Naive thymus-derived CD4-positive, alpha-beta T cell (primary cell): ENCODE measurements at regions of chr17 and their contacts with region 1.

Region 1: GRCh38 chr17:1716076-1716995 is 6.2 kb upstream of the TLCD2 start:
- DNase-seq: peak; percentile 99 to 100 (median 100)
- ATAC-seq: peak; percentile 92
- H3K4me3 ChIP-seq: peak overlapping the region; percentile 92
- H3K4me3 Mint-ChIP-seq: peak overlapping the region; percentile 87 to 98 (median 94)
- H3K27ac ChIP-seq: peak overlapping the region; percentile 73
- H3K27ac Mint-ChIP-seq: peak overlapping the region; percentile 70 to 99 (median 93)
- H3K4me1 ChIP-seq: peaks cover 17 to 26% of the 10 kb centered on the region in 2 donors
- H3K4me1 Mint-ChIP-seq: peaks cover 19 to 45% (median 24%) of the 10 kb centered on the region in 7 donors
- H3K27me3 ChIP-seq: peaks cover 0 to 7% of the 10 kb centered on the region in 2 donors
- H3K27me3 Mint-ChIP-seq: peaks cover 0 to 9% (median 6%) of the 10 kb centered on the region in 5 donors

Region 2: DNA sequence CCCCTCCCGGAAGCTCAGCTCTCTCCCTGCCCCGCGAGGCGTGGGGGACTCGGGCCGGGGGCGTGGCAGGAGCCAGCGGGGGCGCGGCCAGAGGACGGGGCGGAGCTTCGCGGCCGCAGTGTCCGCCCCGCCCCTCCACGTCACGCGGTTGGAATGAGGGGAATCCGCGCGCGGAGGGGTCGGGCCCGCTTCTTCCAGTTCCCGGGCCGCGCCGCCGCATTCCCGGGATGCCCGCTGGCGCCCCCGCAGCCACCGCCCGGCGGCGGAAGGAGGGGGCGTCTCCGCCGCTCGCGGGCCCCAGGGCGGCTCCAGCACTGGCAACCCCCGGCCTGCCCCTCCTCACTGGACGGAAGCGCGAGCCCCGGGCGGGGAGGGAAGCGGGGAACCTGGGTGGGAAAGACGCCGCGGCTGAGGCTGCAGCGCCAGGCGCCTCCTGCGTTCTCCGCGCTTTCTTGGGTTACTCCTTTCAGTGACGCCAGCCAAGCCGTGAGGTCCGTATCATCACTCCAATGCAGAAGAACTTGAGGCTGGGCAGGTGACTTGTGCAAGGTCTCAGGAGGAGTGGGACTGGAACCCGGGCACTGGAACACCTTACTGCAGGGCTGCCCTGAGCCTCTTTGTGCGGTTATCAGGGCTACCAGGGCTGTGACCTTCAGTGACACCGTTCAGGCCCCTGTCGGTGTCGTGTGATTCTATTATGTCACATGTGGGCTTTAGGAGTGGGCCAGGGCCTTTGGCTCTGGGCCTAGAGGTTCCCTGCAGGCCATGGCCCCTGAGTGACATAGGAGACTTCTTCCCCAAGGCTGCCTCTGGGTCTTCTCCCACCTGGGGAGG is 228.1 kb before region 1 on chr17:
- CTCF ChIA-PET with region 1: no interaction called
- POLR2A ChIA-PET with region 1: no interaction called
- intact Hi-C with region 1: no loop called
- DNase-seq: peak; percentile 40 to 83 (median 61)
- ATAC-seq: peak; percentile 61
- H3K4me3 ChIP-seq: peak overlapping the region; percentile 65
- H3K4me3 Mint-ChIP-seq: peak overlapping the region; percentile 82 to 95 (median 88)
- H3K27ac ChIP-seq: peak overlapping the region; percentile 78
- H3K27ac Mint-ChIP-seq: peak overlapping the region; percentile 49 to 92 (median 71)
- H3K4me1 ChIP-seq: peaks cover 21 to 47% of the 10 kb centered on the region in 2 donors
- H3K4me1 Mint-ChIP-seq: peaks cover 0 to 58% (median 44%) of the 10 kb centered on the region in 7 donors
- H3K27me3 ChIP-seq: no peaks in the 10 kb centered on the region
- H3K27me3 Mint-ChIP-seq: peaks cover 0 to 4% (median 0%) of the 10 kb centered on the region in 5 donors

Region 3: GRCh38 chr17:1516388-1517161 is 199.8 kb before region 1 on chr17 and contains the start of gene INPP5K:
- CTCF ChIA-PET with region 1: no interaction called
- POLR2A ChIA-PET with region 1: interaction called, 3 read pairs
- intact Hi-C with region 1: loop called (anchors 1 kb)
- DNase-seq: peak; percentile 92 to 99 (median 97)
- ATAC-seq: peak; percentile 98
- H3K4me3 ChIP-seq: peak within 1 kb of the TSS; percentile 84
- H3K4me3 Mint-ChIP-seq: peak within 1 kb of the TSS; percentile 78 to 93 (median 91)
- H3K27ac ChIP-seq: peak within 1 kb of the TSS; percentile 97
- H3K27ac Mint-ChIP-seq: peak within 1 kb of the TSS; percentile 68 to 97 (median 92)
- H3K4me1 ChIP-seq: peaks cover 9 to 14% of the 10 kb centered on the region in 2 donors
- H3K4me1 Mint-ChIP-seq: peaks cover 18 to 47% (median 29%) of the 10 kb centered on the region in 7 donors
- H3K27me3 ChIP-seq: no peaks in the 10 kb centered on the region
- H3K27me3 Mint-ChIP-seq: no peaks in the 10 kb centered on the region
- total RNA-seq, gene INPP5K: 50.5 to 184 (median 84.2) TPM

Region 4: DNA sequence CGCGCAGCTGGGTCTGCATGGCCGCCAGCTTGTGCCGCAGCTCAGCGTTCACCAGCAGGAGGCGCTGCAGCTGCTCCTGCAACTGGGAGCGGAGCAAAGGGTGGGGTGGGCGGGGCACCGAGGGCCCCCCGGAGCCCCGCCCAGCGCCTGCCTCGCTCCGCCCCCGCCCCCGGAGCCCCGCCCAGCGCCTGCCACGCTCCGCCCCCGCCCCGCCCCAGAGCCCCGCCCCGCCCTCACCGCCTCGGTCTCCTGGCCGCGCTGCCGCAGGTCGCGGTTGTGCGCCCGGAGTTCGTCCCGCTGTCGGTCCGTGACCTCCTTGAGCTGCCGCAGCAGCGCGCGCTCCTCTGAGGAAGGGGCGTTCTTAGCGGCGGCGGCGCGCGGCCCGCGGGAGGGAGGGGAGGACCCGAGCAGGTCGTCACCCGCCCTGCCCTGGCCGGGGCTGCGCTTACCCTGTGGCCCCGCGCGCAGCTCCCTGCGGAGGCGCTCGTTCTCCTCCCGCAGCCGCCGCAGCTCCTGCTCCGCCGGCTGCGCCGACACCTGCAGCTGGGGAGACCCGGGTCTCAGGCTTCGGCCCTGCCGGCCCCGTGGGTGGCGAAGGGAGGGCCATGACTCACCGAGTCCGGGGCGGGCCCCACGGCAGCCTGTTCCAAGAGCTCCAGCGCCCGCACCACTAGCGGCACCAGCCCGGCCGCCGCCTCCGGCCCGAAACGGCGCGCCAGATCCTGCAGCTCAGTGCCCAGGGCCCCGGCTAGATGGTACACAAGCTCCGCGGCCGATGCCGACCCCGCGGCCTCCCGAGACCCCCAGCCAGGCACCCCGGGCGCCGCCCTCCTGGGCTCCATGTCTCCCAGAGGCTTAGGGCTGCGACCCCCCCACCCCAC is 67.1 kb before region 1 on chr17:
- CTCF ChIA-PET with region 1: interaction called, 8 read pairs
- POLR2A ChIA-PET with region 1: interaction called, 5 read pairs
- intact Hi-C with region 1: loop called (anchors 1 kb)
- DNase-seq: peak; percentile 88 to 97 (median 93)
- ATAC-seq: peak; percentile 90
- H3K4me3 ChIP-seq: peak overlapping the region; percentile 64
- H3K4me3 Mint-ChIP-seq: peak overlapping the region; percentile 65 to 81 (median 74)
- H3K27ac ChIP-seq: peak overlapping the region; percentile 69
- H3K27ac Mint-ChIP-seq: peak overlapping the region in 5 of 9 donors; percentile 38 to 58 (median 55)
- H3K4me1 ChIP-seq: peaks cover 15 to 21% of the 10 kb centered on the region in 2 donors
- H3K4me1 Mint-ChIP-seq: peaks cover 0 to 38% (median 10%) of the 10 kb centered on the region in 7 donors
- H3K27me3 ChIP-seq: no peaks in the 10 kb centered on the region
- H3K27me3 Mint-ChIP-seq: no peaks in the 10 kb centered on the region

Region 5: DNA sequence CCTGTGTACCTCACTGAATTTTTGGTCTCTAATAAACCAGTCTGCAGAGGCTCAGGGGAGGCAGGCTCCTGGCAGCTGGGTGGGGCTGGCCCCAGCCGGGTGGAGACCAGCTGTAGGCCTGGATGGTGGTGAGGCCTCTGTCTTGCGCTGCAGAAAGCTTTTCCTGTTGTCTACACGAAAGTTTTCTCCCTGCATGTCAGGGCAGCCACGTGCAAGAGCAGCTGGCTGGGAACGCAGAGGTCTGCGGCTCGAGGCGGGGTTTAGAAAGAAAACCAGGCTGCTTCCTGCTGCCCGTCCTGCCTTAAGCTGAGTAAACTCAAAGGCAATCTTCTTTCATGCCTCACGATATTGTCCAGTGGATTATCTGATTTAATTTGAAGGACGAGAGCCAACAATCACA is 47.9 kb after region 1 on chr17:
- CTCF ChIA-PET with region 1: interaction called, 9 read pairs
- POLR2A ChIA-PET with region 1: interaction called, 4 read pairs
- intact Hi-C with region 1: loop called (anchors 1 to 5 kb)
- DNase-seq: peak in 7 of 9 donors; percentile 60 to 84 (median 71)
- ATAC-seq: peak; percentile 88
- H3K4me3 ChIP-seq: no peak overlapping the region
- H3K4me3 Mint-ChIP-seq: peak overlapping the region; percentile 50 to 85 (median 70)
- H3K27ac ChIP-seq: peak overlapping the region; percentile 33
- H3K27ac Mint-ChIP-seq: peak overlapping the region; percentile 64 to 92 (median 84)
- H3K4me1 ChIP-seq: peaks cover 19 to 33% of the 10 kb centered on the region in 2 donors
- H3K4me1 Mint-ChIP-seq: peaks cover 22 to 60% (median 35%) of the 10 kb centered on the region in 7 donors
- H3K27me3 ChIP-seq: no peaks in the 10 kb centered on the region
- H3K27me3 Mint-ChIP-seq: peaks cover 0 to under 1% (median 0%) of the 10 kb centered on the region in 5 donors

Region 6: GRCh38 chr17:1829592-1830257 is 113.4 kb after region 1 on chr17 and contains the starts of genes RPA1 and SMYD4:
- CTCF ChIA-PET with region 1: interaction called, 7 read pairs
- POLR2A ChIA-PET with region 1: interaction called, 8 read pairs
- intact Hi-C with region 1: loop called (anchors 1 to 2 kb)
- DNase-seq: peak; percentile 84 to 94 (median 89)
- ATAC-seq: peak; percentile 100
- H3K4me3 ChIP-seq: peak within 1 kb of the TSS; percentile 82
- H3K4me3 Mint-ChIP-seq: peak within 1 kb of the TSS; percentile 89 to 100 (median 98)
- H3K27ac ChIP-seq: peak within 1 kb of the TSS; percentile 86
- H3K27ac Mint-ChIP-seq: peak within 1 kb of the TSS; percentile 89 to 99 (median 95)
- H3K4me1 ChIP-seq: peaks cover 17 to 26% of the 10 kb centered on the region in 2 donors
- H3K4me1 Mint-ChIP-seq: peaks cover 39 to 80% (median 67%) of the 10 kb centered on the region in 7 donors
- H3K27me3 ChIP-seq: no peaks in the 10 kb centered on the region
- H3K27me3 Mint-ChIP-seq: no peaks in the 10 kb centered on the region
- total RNA-seq, gene RPA1: 57.8 to 264 (median 110) TPM
- total RNA-seq, gene SMYD4: 19.8 to 38.4 (median 32.5) TPM

Region 7: DNA sequence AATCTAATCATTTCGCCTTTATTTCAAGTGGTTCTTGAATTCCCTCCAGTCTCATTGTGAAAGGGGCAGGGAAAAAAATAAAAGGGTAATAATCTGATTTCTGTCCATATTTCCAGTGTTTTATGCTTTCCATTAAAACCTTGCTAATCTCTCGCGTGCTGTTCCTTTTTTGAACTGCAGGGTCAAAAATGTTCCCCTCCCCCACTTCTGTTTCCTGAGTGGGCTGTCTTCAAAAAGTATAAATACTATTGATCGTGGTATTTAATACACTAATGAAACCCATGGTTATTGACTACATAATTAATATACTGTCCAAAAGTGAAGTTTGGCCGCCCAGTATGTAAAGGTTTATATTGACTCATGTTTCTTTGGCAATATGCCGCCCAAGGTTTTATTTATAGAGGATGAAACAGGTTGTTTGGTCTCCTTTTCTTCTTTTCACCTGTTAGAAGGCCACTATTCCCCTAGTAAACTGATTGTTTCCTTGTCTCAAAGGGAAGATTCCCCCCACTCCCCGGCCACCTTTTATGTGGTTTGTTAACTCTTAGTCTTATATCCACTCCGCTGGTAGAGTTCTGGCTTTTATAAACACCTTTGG is 183.2 kb after region 1 on chr17:
- CTCF ChIA-PET with region 1: no interaction called
- POLR2A ChIA-PET with region 1: no interaction called
- intact Hi-C with region 1: no loop called
- DNase-seq: no peak
- ATAC-seq: no peak
- H3K4me3 ChIP-seq: no peak overlapping the region
- H3K4me3 Mint-ChIP-seq: no peak overlapping the region
- H3K27ac ChIP-seq: no peak overlapping the region
- H3K27ac Mint-ChIP-seq: peak overlapping the region in 1 of 9 donors; percentile 33
- H3K4me1 ChIP-seq: no peaks in the 10 kb centered on the region
- H3K4me1 Mint-ChIP-seq: peaks cover 0 to 11% (median 0%) of the 10 kb centered on the region in 7 donors
- H3K27me3 ChIP-seq: no peaks in the 10 kb centered on the region
- H3K27me3 Mint-ChIP-seq: peaks cover 0 to 10% (median 3%) of the 10 kb centered on the region in 5 donors

Region 8: DNA sequence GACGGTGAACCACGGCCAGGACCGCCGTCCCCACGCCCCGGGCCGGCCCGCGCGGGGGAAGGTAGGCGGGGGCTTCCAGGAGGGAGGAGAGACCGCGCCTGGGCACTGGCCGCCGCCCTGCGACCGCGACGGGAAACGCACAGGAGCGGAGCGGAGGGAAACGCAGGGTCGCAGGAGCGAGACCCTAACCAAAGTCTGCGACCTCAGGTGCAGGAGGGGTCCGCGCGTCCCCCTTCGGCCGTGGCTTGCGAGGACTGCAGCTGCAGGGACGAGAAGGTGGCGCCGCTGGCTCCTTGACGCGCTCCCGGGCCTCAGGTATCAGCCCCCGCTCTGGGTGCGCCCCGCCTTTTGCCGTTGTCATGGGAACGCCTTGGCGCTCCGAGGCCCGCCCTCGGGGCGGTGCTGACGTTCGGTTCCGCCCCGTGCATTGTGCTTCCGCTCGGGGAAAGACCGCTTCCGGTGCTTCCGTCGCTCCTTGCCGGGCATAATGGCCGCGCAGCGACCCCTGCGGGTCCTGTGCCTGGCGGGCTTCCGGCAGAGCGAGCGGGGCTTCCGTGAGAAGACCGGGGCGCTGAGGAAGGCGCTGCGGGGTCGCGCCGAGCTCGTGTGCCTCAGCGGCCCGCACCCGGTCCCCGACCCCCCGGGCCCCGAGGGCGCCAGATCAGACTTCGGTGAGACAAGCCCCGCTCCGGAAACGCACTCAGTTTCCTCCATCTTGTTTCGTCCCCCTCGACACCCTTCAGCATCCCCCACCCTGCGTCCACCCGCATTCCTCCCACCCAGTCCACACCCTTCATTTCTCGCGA is 325.4 kb after region 1 on chr17 and contains the start of gene OVCA2:
- CTCF ChIA-PET with region 1: interaction called, 4 read pairs
- POLR2A ChIA-PET with region 1: no interaction called
- intact Hi-C with region 1: loop called (anchors 1 kb)
- DNase-seq: peak; percentile 94 to 98 (median 96)
- ATAC-seq: peak; percentile 97
- H3K4me3 ChIP-seq: peak within 1 kb of the TSS; percentile 86
- H3K4me3 Mint-ChIP-seq: peak within 1 kb of the TSS; percentile 89 to 100 (median 92)
- H3K27ac ChIP-seq: peak within 1 kb of the TSS; percentile 89
- H3K27ac Mint-ChIP-seq: peak within 1 kb of the TSS; percentile 87 to 99 (median 94)
- H3K4me1 ChIP-seq: peaks cover 8 to 16% of the 10 kb centered on the region in 2 donors
- H3K4me1 Mint-ChIP-seq: peaks cover 9 to 29% (median 22%) of the 10 kb centered on the region in 7 donors
- H3K27me3 ChIP-seq: no peaks in the 10 kb centered on the region
- H3K27me3 Mint-ChIP-seq: no peaks in the 10 kb centered on the region
- total RNA-seq, gene OVCA2: 24.5 to 37.9 (median 31.8) TPM

Region 9: GRCh38 chr17:2401426-2402221 is 685.3 kb after region 1 on chr17:
- CTCF ChIA-PET with region 1: no interaction called
- POLR2A ChIA-PET with region 1: no interaction called
- intact Hi-C with region 1: loop called (anchors 1 to 2 kb)
- DNase-seq: peak; percentile 94 to 100 (median 99)
- ATAC-seq: peak; percentile 73
- H3K4me3 ChIP-seq: peak overlapping the region; percentile 94
- H3K4me3 Mint-ChIP-seq: peak overlapping the region; percentile 94 to 100 (median 98)
- H3K27ac ChIP-seq: peak overlapping the region; percentile 97
- H3K27ac Mint-ChIP-seq: peak overlapping the region; percentile 97 to 100 (median 99)
- H3K4me1 ChIP-seq: peaks cover 6 to 30% of the 10 kb centered on the region in 2 donors
- H3K4me1 Mint-ChIP-seq: peaks cover 27 to 62% (median 35%) of the 10 kb centered on the region in 7 donors
- H3K27me3 ChIP-seq: no peaks in the 10 kb centered on the region
- H3K27me3 Mint-ChIP-seq: no peaks in the 10 kb centered on the region